ENCODE measurements at regions of chr6 and their contacts with region 1.

Region 1: DNA sequence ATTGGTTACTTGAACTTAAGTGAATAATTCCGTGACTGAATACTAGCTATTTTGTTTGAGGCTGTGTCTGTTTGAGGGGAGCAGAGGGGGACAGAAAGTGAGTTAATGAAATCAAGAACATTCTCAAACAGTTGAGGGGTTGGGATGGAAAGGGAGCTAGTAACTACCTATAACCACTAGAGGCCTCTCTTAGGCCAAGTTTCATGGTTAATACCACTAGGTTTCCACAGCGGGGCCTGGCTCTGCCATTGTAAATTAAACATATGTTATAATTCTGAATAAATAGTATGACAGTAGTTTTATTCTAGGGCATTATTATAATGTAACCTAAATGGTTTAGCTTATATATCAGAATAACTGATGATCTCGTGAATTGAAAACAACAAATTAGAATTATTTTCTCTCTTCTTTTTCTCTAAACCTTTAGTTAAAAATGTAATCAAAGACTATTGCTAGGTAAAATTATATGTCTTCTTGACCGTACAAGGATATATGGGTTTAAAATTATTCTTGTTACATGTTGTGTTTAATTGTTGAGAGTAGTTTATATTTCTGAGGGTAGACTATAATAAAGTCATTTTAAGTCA is 108.1 kb downstream of the BCKDHB start:
- DNase-seq: peak; percentile 38
- ATAC-seq: peak; percentile 53 to 79

Region 2: GRCh38 chr6:79971195-79971594 is 243.3 kb before region 1 on chr6:
- intact Hi-C with region 1: no loop called
- DNase-seq: no peak
- ATAC-seq: no peak

Region 3: DNA sequence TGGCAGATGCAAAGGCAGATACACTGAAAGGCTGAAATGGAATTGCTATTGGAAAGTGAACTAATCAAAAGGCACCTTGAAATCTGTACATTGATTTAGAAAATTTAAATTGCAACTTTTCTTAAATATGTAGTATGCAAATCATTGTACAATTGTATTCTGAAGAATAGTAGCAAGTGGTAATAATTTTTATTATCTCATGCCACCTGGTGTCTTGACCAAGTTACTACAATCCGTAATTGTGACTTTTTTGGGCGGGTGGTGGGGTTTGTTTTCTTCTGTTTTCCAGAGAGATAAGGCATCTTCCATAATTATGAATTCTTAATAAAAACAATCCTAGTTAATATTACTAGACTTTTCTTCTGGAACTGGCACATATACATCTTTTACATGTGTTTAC is 120.5 kb before region 1 on chr6:
- intact Hi-C with region 1: no loop called
- DNase-seq: no peak
- ATAC-seq: no peak

Region 4: DNA sequence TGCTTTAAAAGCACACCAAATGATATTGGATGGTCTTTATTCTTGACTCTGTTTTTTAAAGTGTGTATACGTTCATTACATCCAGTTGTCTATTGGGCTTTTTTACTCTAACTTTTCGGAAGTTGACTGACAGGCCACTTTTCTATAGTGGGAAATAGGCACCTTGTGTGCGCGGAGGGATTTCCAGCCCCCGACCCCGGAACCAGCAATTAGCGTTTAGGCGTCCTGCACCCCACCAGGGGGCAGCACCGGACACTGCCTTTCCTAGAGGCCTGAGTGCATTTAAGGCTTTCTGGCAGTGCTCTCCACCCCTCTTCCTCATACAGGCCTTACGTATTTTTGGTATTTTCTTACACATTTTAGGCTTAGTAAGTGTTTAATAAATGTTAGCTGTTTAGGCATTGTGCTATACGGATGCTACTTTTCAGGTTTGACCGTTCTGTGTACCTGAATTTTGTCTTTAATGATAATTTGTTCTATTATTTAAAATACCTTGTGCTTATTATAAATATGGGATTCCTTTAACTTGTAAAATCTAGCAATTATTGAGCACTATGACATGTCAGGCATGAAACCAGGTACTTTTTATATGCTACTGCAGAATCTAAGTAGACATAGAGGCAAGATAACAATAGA is 123.8 kb after region 1 on chr6:
- intact Hi-C with region 1: loop called in 1 of 2 experiments (anchors 10 kb)
- DNase-seq: peak; percentile 79
- ATAC-seq: peak; percentile 45 to 47

Region 5: GRCh38 chr6:80605165-80605989 is 390.8 kb after region 1 on chr6:
- intact Hi-C with region 1: loop called in 1 of 2 experiments (anchors 10 kb)
- DNase-seq: no peak
- ATAC-seq: no peak